Naive thymus-derived CD4-positive, alpha-beta T cell (primary cell): ENCODE measurements at regions of chr12 and their contacts with region 1.

Region 1: GRCh38 chr12:64351265-64351664 is 39.3 kb downstream of the C12orf56 start:
- DNase-seq: no peak
- ATAC-seq: no peak
- H3K4me3 ChIP-seq: no peak overlapping the region
- H3K4me3 Mint-ChIP-seq: no peak overlapping the region
- H3K27ac ChIP-seq: no peak overlapping the region
- H3K27ac Mint-ChIP-seq: peak overlapping the region in 1 of 9 donors; percentile 46
- H3K4me1 ChIP-seq: no peaks in the 10 kb centered on the region
- H3K4me1 Mint-ChIP-seq: no peaks in the 10 kb centered on the region
- H3K27me3 ChIP-seq: no peaks in the 10 kb centered on the region
- H3K27me3 Mint-ChIP-seq: peaks cover 0 to 1% (median 0%) of the 10 kb centered on the region in 5 donors

Region 2: DNA sequence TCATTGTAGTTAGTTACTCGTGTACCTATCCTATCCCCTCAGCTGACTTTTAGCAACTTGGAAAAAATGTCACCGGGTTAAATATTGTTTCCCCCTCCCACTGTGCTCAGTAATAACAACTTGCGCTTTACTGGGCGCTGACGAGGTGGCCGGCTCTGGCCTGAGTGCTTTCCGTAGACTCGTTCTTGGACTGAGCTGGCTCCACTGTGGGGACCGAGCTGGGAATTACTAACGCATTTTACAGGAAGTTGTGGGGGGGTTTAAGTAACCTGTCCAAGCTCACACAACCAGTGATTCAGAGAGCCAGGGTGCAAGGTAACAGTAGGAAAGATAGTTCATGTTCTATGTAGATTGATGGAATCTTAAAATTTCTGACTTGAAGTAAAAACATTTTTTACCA is 46.7 kb before region 1 on chr12:
- CTCF ChIA-PET with region 1: no interaction called
- POLR2A ChIA-PET with region 1: interaction called, 11 read pairs
- intact Hi-C with region 1: no loop called
- DNase-seq: no peak
- ATAC-seq: no peak
- H3K4me3 ChIP-seq: no peak overlapping the region
- H3K4me3 Mint-ChIP-seq: no peak overlapping the region
- H3K27ac ChIP-seq: no peak overlapping the region
- H3K27ac Mint-ChIP-seq: no peak overlapping the region
- H3K4me1 ChIP-seq: no peaks in the 10 kb centered on the region
- H3K4me1 Mint-ChIP-seq: peaks cover 0 to 2% (median 0%) of the 10 kb centered on the region in 7 donors
- H3K27me3 ChIP-seq: no peaks in the 10 kb centered on the region
- H3K27me3 Mint-ChIP-seq: peaks cover 0 to 10% (median 0%) of the 10 kb centered on the region in 5 donors